ENCODE measurements at regions of chr15 and their contacts with region 1.

Region 1: GRCh38 chr15:30896211-30896606 is 7.5 kb upstream of the FAN1 start:
- DNase-seq: no peak
- CTCF ChIP-seq: no peak

Region 2: DNA sequence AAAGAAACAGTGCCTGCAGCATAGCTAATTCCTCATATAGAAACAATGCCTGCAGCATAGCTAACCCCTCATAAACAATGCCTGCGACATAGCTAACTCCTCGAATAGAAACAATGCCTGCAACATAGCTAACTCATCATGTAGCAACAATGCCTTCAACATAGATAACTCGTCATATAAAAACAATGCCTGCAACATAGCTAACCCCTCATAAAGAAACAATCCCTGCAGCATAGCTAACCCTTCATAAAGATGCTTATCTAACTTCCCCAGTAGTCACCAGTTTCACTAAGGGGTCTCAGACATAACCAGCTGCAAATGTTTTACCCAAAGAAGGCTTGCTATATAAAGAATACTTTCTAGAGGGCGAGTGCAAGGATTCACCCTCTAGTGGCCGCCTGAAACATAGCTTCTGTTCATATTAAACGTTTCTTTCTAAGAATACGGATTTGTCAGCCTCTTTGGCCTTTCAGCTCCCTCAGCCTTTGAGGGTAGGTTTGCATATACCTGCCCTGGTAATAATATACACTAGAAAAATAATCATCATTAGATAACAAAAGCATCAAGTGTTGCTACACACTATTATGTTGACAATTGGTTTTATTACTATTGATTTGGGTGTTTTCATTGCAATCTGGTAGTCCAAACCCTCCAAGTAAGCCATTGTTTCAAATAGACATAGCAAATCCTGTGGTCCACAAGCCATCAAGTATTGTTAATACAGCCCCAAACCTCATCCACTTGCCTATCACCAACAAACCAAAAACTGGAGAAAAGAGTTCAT is 36.9 kb before region 1 on chr15:
- CTCF ChIA-PET with region 1: interaction called, 10 read pairs
- POLR2A ChIA-PET with region 1: no interaction called
- DNase-seq: peak; percentile 22
- CTCF ChIP-seq: peak; percentile 61

Region 3: DNA sequence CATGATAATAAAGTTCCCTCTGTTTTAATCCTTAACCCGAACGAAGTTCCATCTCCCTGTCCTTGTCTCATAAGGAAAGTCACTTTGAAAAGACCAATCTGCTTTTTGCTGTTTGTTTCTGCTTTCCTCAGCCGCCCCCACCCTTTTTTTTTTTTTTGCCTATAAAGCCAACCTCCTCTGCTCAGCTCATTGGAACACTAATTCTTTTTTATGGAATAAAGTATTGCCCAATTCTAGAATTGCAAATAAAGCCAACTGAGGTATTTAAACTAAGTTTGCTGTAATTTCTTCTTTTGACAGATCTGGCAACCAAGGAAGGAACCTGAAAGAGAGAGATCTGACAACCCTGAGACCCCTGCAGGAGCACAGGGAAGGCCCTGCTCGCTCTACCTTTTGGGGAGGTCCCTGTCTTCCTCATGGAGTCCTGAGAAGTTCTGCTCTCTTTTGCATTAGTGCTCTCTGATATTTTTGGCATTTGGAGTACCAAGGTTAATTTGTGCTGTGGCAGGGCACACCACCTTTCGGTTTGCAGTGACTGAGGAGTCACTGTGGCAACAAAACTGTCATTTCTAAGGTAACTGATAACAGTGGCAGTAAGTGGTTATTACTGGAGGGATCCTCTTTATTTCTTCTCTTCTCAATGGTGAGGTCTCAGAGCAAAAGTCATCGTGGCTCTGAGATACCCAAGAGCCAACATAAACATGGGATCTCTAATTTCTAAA is 240.6 kb after region 1 on chr15:
- CTCF ChIA-PET with region 1: no interaction called
- POLR2A ChIA-PET with region 1: no interaction called
- DNase-seq: no peak
- CTCF ChIP-seq: no peak